ENCODE measurements at regions of chr12 and their contacts with region 1.

Region 1: GRCh38 chr12:52924764-52925716 is 20.2 kb upstream of the KRT8 start:
- DNase-seq: peak; percentile 89
- ATAC-seq: peak; percentile 52
- H3K4me3 ChIP-seq: peak overlapping the region; percentile 47
- H3K27ac ChIP-seq: peak overlapping the region; percentile 98
- H3K4me1 ChIP-seq: peaks cover 38% of the 10 kb centered on the region
- H3K27me3 ChIP-seq: no peaks in the 10 kb centered on the region
- CTCF ChIP-seq: no peak

Region 2: GRCh38 chr12:52942066-52942900 is 17.2 kb after region 1 on chr12:
- CTCF ChIA-PET with region 1: interaction called, 3 read pairs
- POLR2A ChIA-PET with region 1: interaction called, 10 read pairs
- intact Hi-C with region 1: no loop called
- DNase-seq: no peak
- ATAC-seq: no peak
- H3K4me3 ChIP-seq: no peak overlapping the region
- H3K27ac ChIP-seq: no peak overlapping the region
- H3K4me1 ChIP-seq: peaks cover 33% of the 10 kb centered on the region
- H3K27me3 ChIP-seq: no peaks in the 10 kb centered on the region
- CTCF ChIP-seq: no peak

Region 3: GRCh38 chr12:52949413-52950331 is 24.6 kb after region 1 on chr12:
- CTCF ChIA-PET with region 1: no interaction called
- POLR2A ChIA-PET with region 1: interaction called, 10 read pairs
- intact Hi-C with region 1: loop called (anchors 1 kb)
- DNase-seq: peak; percentile 96
- ATAC-seq: peak; percentile 78
- H3K4me3 ChIP-seq: peak overlapping the region; percentile 94
- H3K27ac ChIP-seq: peak overlapping the region; percentile 84
- H3K4me1 ChIP-seq: peaks cover 57% of the 10 kb centered on the region
- H3K27me3 ChIP-seq: no peaks in the 10 kb centered on the region
- CTCF ChIP-seq: no peak

Region 4: GRCh38 chr12:52969828-52970569 is 45.0 kb after region 1 on chr12:
- CTCF ChIA-PET with region 1: no interaction called
- POLR2A ChIA-PET with region 1: no interaction called
- intact Hi-C with region 1: no loop called
- DNase-seq: peak; percentile 32
- ATAC-seq: no peak
- H3K4me3 ChIP-seq: no peak overlapping the region
- H3K27ac ChIP-seq: no peak overlapping the region
- H3K4me1 ChIP-seq: peaks cover 27% of the 10 kb centered on the region
- H3K27me3 ChIP-seq: no peaks in the 10 kb centered on the region
- CTCF ChIP-seq: no peak

Measured in PC-3 (cell line).